Right ventricle myocardium superior (tissue), 1 donor: ENCODE measurements at regions of chr5 and their contacts with region 1.

Region 1: DNA sequence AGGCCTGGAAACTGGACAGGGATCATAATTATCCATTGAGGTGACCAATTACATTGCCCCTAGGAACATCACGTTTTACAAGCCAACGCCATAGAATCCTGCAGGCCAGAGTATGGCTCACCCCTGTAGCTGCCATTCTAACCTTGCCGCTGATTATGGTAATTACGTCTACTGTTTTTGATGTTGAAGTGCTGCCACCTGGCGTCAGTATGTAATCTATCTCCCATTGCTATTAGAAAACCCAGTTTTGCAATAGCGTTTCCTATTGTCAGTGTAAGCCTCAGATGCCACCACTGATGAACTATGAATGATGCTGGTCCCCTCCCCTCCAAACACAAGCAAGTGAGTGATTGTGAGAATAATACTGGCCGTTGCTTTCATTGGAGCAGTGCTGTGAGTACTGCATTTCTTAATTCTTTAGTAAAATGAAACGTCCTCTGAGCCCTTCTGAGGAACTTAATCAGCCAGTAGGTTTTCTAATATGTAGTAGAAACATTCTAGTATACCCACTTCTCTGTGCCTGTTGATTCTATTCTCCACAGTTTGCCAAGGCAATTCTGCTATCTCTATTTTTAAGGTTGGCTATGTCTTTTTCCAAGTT is 100.5 kb upstream of the NMUR2 start:
- DNase-seq: no peak
- ATAC-seq: peak; percentile 93

Region 2: GRCh38 chr5:151825445-151825844 is 680.1 kb before region 1 on chr5:
- intact Hi-C with region 1: loop called (anchors 10 kb)
- DNase-seq: no peak
- ATAC-seq: peak; percentile 87

Region 3: GRCh38 chr5:152379331-152379730 is 126.2 kb before region 1 on chr5:
- intact Hi-C with region 1: loop called (anchors 5 kb)
- DNase-seq: no peak
- ATAC-seq: peak; percentile 49